Endothelial cell of umbilical vein (primary cell): ENCODE measurements at regions of chr1 and their contacts with region 1.

Region 1: DNA sequence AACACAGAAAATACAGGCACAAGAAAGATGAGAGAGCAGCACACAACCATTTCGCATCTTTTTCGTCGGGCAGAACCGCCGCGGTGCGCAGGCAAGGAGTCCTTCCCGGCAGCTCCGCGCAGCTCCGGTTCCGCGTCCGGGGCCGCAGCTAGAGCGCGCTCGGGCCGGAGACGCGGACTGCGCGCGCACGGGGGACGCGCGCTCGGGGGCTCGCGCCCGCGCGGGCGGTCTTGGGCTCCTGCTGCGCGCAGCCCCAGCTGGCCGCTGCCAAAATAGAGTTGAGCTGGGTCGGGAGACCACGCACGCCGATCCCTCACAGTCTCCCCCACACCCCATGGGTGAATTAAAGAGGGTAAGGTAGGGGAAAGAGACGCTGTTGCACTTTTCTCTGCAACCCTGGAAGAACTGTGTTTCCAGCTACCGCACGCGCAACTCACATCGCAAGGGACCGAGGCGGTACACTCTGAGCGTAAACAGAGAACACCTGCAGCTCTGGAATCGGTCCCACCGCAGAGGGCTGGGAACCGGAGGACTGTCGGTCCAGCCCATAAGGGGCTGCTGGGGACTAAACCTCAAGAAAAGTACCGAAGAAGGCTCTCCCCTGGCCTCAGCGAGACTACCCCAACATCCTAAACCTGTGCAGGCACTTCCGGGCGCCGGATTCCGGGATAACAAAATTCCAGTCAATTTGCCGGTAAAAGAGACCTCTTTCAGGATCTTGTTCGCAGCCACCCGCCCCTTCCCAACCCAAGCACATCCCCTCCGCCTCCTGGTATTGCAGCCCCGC is 1.7 kb downstream of the NR5A2 start:
- DNase-seq: peak; percentile 69
- H3K4me3 ChIP-seq: peak overlapping the region; percentile 9 to 64 (median 50)
- H3K27ac ChIP-seq: no peak overlapping the region
- H3K4me1 ChIP-seq: peaks cover 7% of the 10 kb centered on the region
- H3K27me3 ChIP-seq: peaks cover 19 to 56% of the 10 kb centered on the region in 2 experiments
- CTCF ChIP-seq: no peak
- POLR2A ChIP-seq: no peak

Region 2: DNA sequence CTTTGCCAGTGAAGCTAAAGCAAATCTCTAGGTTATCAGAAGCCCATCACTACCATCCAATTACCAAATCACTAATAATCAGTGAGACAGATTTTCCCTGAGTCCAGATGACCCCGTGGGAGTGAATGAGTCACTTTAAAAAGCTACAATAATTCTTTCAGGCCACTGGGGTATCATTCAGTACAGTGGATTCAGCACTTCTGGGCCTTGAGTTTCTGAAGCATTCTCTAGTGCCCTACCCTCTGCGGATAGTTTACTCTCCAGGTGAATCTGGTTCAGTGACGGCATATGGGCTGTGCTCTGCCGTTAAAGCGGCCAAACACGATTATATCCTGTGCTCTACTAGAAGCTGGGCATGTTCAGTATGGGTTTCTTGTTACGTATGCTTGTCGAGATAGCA is 24.4 kb after region 1 on chr1:
- CTCF ChIA-PET with region 1: interaction called, 12 read pairs
- POLR2A ChIA-PET with region 1: no interaction called
- dilution Hi-C with region 1: no loop called
- intact Hi-C with region 1: no loop called
- DNase-seq: no peak
- H3K4me3 ChIP-seq: no peak overlapping the region
- H3K27ac ChIP-seq: no peak overlapping the region
- H3K4me1 ChIP-seq: no peaks in the 10 kb centered on the region
- H3K27me3 ChIP-seq: peaks cover 0 to 8% of the 10 kb centered on the region in 2 experiments
- CTCF ChIP-seq: no peak
- POLR2A ChIP-seq: no peak